ENCODE measurements at regions of chr1 and their contacts with region 1.

Region 1: GRCh38 chr1:59296358-59297256 is at the start of gene FGGY:
- DNase-seq: peak; percentile 98 to 99 (median 98)
- ATAC-seq: peak; percentile 94 to 97 (median 95)
- H3K4me3 ChIP-seq: peak within 1 kb of the TSS; percentile 8 to 81 (median 62)
- H3K27ac ChIP-seq: peak within 1 kb of the TSS; percentile 90 to 99 (median 96)
- H3K4me1 ChIP-seq: peaks cover 0 to 45% (median 18%) of the 10 kb centered on the region in 12 donors
- H3K27me3 ChIP-seq: no peaks in the 10 kb centered on the region
- CTCF ChIP-seq: no peak
- POLR2A ChIP-seq: peak; percentile 51 to 78
- total RNA-seq, gene FGGY: 20.8 to 42.9 (median 33.9) TPM

Region 2: DNA sequence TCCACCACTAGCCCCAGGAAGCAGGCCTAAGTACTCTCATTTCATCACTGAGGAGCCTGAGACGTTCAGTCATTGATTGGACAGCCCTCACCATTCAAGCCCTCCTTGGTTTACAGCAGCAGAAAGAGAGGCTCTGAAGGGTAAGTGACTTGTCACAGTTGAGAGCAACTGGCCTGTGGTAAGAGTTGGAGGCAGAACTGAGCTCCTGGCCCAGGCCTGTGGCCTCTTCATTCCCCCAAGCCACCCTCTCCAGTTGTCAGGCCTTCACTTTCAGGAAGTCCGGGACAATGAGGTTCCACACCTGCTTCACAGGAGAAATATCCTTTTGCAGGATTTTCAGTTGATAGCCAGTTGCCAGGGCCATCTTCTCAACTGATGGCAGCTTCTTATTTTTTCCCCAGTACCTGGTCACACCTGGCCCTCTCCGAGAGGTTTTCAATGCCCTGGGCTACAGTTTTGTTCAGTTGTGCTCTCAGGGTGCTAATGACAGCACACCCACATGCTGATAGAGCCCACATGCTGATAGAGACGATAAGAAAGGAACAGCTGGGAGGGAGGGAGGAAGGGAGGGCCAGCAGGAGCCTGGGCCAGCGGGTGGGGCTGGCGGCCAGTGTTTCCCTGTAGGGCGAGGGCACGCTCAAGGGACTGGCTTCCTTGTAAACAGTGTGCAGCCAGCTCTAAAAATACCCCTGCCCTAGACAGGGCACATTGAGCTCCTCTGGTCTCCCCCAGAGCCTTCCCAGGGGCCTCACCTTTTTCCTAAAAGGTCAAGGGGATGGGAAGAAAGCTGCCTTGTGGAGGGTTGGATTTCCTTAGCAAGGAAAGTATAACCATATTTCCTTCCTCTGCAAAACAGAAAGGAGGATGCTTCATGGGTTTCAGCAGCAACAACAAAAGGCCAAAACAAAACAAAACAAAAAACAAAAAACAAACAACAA is 400.1 kb before region 1 on chr1:
- intact Hi-C with region 1: loop called in 8 of 10 experiments (anchors 5 to 10 kb)
- DNase-seq: peak; percentile 64 to 84 (median 80)
- ATAC-seq: peak; percentile 81 to 87 (median 84)
- H3K4me3 ChIP-seq: no peak overlapping the region
- H3K27ac ChIP-seq: peak overlapping the region; percentile 53 to 82 (median 74)
- H3K4me1 ChIP-seq: peaks cover 13 to 83% (median 68%) of the 10 kb centered on the region in 12 donors
- H3K27me3 ChIP-seq: no peaks in the 10 kb centered on the region
- CTCF ChIP-seq: peak in 1 of 12 donors; percentile 30
- POLR2A ChIP-seq: no peak

Region 3: DNA sequence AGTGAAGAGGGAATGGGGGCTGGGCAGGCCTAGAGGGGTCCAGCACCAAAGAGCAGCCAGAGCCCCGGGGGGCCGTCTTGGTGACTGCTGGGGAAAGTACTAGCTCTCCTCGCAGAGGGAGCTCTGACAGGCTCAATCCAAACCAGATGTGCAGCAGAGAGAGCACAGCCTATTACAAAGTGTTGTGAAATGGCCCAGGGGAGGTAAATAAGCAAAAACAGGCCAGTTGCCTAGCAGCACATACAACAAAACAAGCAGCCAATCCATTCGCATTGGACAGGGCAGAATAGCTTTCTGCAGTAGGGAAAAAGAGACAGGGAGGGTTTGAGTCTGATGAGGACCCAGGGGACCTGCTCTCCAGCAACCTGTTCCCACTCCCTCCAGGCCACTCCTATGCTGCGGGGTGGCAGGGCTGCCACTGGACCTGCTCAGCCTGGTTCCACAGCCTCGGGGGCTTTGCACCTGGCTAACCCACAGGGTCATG is 239.4 kb before region 1 on chr1:
- intact Hi-C with region 1: loop called in 4 of 10 experiments (anchors 5 to 10 kb)
- DNase-seq: peak; percentile 81 to 91 (median 84)
- ATAC-seq: peak; percentile 89 to 93 (median 91)
- H3K4me3 ChIP-seq: no peak overlapping the region
- H3K27ac ChIP-seq: peak overlapping the region; percentile 35 to 77 (median 58)
- H3K4me1 ChIP-seq: peaks cover 0 to 42% (median 26%) of the 10 kb centered on the region in 12 donors
- H3K27me3 ChIP-seq: no peaks in the 10 kb centered on the region
- CTCF ChIP-seq: peak in 3 of 12 donors; percentile 12 to 37 (median 22)
- POLR2A ChIP-seq: peak in 1 of 2 donors; percentile 57

Region 4: DNA sequence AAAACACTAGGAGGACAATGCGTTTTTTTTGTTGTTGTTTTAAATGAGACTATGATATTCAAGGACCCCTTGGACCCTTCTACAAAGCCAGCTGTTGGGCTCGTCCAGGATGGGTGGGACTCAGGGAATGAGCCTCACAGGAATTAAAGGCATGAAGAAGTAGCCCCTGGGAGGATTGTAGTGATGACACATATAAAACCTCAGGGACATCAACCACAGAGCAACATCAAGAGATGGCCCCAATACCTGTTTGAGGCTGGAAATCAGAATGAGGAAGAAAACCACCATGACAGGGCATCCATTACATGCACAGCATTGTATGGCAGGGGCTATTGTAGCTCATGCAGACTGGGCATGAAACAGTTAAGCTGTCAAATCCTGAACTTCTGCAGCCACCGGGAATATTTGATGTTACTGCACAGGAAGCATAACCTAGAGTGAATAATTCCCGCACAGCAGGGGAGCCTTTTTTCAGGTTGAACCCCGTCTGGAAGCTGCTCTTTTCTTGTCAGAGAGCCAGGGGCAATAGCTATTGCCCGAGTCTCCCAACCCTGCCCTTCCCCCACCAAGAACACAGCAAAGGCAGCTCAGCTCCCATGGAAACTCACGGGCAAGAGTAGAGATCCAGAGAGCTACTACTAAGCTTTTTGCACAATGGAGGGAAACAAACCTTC is 139.9 kb before region 1 on chr1:
- intact Hi-C with region 1: loop called in 4 of 10 experiments (anchors 1 to 5 kb)
- DNase-seq: no peak
- ATAC-seq: peak in 1 of 4 donors; percentile 52
- H3K4me3 ChIP-seq: peak overlapping the region in 4 of 12 donors; percentile 2 to 18 (median 10)
- H3K27ac ChIP-seq: peak overlapping the region in 2 of 12 donors; percentile 17 to 39
- H3K4me1 ChIP-seq: peaks cover 0 to 27% (median 17%) of the 10 kb centered on the region in 12 donors
- H3K27me3 ChIP-seq: no peaks in the 10 kb centered on the region
- CTCF ChIP-seq: no peak
- POLR2A ChIP-seq: no peak

Region 5: GRCh38 chr1:59678493-59679228 is 382.1 kb after region 1 on chr1:
- intact Hi-C with region 1: loop called in 1 of 10 experiments (anchors 10 kb)
- DNase-seq: no peak
- ATAC-seq: peak in 1 of 4 donors; percentile 18
- H3K4me3 ChIP-seq: no peak overlapping the region
- H3K27ac ChIP-seq: peak overlapping the region; percentile 1 to 60 (median 18)
- H3K4me1 ChIP-seq: peaks cover 0 to 48% (median 11%) of the 10 kb centered on the region in 12 donors
- H3K27me3 ChIP-seq: no peaks in the 10 kb centered on the region
- CTCF ChIP-seq: no peak
- POLR2A ChIP-seq: no peak

Region 6: GRCh38 chr1:59759156-59759925 is 462.7 kb after region 1 on chr1:
- intact Hi-C with region 1: loop called in 3 of 10 experiments (anchors 2 to 10 kb)
- DNase-seq: peak; percentile 79 to 89 (median 80)
- ATAC-seq: peak; percentile 83 to 96 (median 94)
- H3K4me3 ChIP-seq: peak overlapping the region in 9 of 12 donors; percentile 22 to 46 (median 37)
- H3K27ac ChIP-seq: peak overlapping the region in 9 of 12 donors; percentile 14 to 79 (median 53)
- H3K4me1 ChIP-seq: peaks cover 0 to 14% (median 5%) of the 10 kb centered on the region in 12 donors
- H3K27me3 ChIP-seq: no peaks in the 10 kb centered on the region
- CTCF ChIP-seq: peak; percentile 91 to 99 (median 94)
- POLR2A ChIP-seq: no peak

Region 7: GRCh38 chr1:60088620-60089155 is 792.1 kb after region 1 on chr1:
- intact Hi-C with region 1: no loop called
- DNase-seq: no peak
- ATAC-seq: no peak
- H3K4me3 ChIP-seq: no peak overlapping the region
- H3K27ac ChIP-seq: no peak overlapping the region
- H3K4me1 ChIP-seq: no peaks in the 10 kb centered on the region
- H3K27me3 ChIP-seq: no peaks in the 10 kb centered on the region
- CTCF ChIP-seq: peak in 2 of 12 donors; percentile 20 to 27
- POLR2A ChIP-seq: no peak